CD4-positive, alpha-beta memory T cell (primary cell): ENCODE measurements at regions of chr3 and their contacts with region 1.

Region 1: GRCh38 chr3:109806929-109807328 is 469.6 kb upstream of the DPPA4 start:
- DNase-seq: peak; percentile 72 to 83 (median 80)
- H3K4me3 ChIP-seq: no peak overlapping the region
- H3K4me3 Mint-ChIP-seq: peak overlapping the region; percentile 72 to 88 (median 79)
- H3K27ac ChIP-seq: peak overlapping the region; percentile 40
- H3K27ac Mint-ChIP-seq: peak overlapping the region; percentile 83 to 97 (median 90)
- H3K4me1 ChIP-seq: peaks cover 49% of the 10 kb centered on the region
- H3K4me1 Mint-ChIP-seq: peaks cover 40 to 65% (median 52%) of the 10 kb centered on the region in 4 donors
- H3K27me3 ChIP-seq: no peaks in the 10 kb centered on the region
- H3K27me3 Mint-ChIP-seq: no peaks in the 10 kb centered on the region

Region 2: GRCh38 chr3:109731620-109732473 is 75.1 kb before region 1 on chr3:
- CTCF ChIA-PET with region 1: no interaction called
- POLR2A ChIA-PET with region 1: no interaction called
- intact Hi-C with region 1: loop called (anchors 2 kb)
- DNase-seq: peak; percentile 58 to 66 (median 62)
- H3K4me3 ChIP-seq: no peak overlapping the region
- H3K4me3 Mint-ChIP-seq: no peak overlapping the region
- H3K27ac ChIP-seq: no peak overlapping the region
- H3K27ac Mint-ChIP-seq: no peak overlapping the region
- H3K4me1 ChIP-seq: peaks cover 9% of the 10 kb centered on the region
- H3K4me1 Mint-ChIP-seq: peaks cover 5 to 12% (median 10%) of the 10 kb centered on the region in 4 donors
- H3K27me3 ChIP-seq: no peaks in the 10 kb centered on the region
- H3K27me3 Mint-ChIP-seq: no peaks in the 10 kb centered on the region

Region 3: GRCh38 chr3:109819734-109820133 is 12.8 kb after region 1 on chr3:
- CTCF ChIA-PET with region 1: interaction called, 3 read pairs
- POLR2A ChIA-PET with region 1: interaction called, 4 read pairs
- intact Hi-C with region 1: loop called (anchors 1 kb)
- DNase-seq: no peak
- H3K4me3 ChIP-seq: no peak overlapping the region
- H3K4me3 Mint-ChIP-seq: no peak overlapping the region
- H3K27ac ChIP-seq: no peak overlapping the region
- H3K27ac Mint-ChIP-seq: peak overlapping the region in 1 of 7 donors; percentile 17
- H3K4me1 ChIP-seq: no peaks in the 10 kb centered on the region
- H3K4me1 Mint-ChIP-seq: peaks cover 0 to 3% (median 1%) of the 10 kb centered on the region in 4 donors
- H3K27me3 ChIP-seq: no peaks in the 10 kb centered on the region
- H3K27me3 Mint-ChIP-seq: no peaks in the 10 kb centered on the region

Region 4: GRCh38 chr3:109943181-109943580 is 136.3 kb after region 1 on chr3:
- CTCF ChIA-PET with region 1: no interaction called
- POLR2A ChIA-PET with region 1: no interaction called
- intact Hi-C with region 1: loop called (anchors 10 kb)
- DNase-seq: no peak
- H3K4me3 ChIP-seq: no peak overlapping the region
- H3K4me3 Mint-ChIP-seq: no peak overlapping the region
- H3K27ac ChIP-seq: no peak overlapping the region
- H3K27ac Mint-ChIP-seq: no peak overlapping the region
- H3K4me1 ChIP-seq: no peaks in the 10 kb centered on the region
- H3K4me1 Mint-ChIP-seq: no peaks in the 10 kb centered on the region
- H3K27me3 ChIP-seq: no peaks in the 10 kb centered on the region
- H3K27me3 Mint-ChIP-seq: no peaks in the 10 kb centered on the region

Region 5: DNA sequence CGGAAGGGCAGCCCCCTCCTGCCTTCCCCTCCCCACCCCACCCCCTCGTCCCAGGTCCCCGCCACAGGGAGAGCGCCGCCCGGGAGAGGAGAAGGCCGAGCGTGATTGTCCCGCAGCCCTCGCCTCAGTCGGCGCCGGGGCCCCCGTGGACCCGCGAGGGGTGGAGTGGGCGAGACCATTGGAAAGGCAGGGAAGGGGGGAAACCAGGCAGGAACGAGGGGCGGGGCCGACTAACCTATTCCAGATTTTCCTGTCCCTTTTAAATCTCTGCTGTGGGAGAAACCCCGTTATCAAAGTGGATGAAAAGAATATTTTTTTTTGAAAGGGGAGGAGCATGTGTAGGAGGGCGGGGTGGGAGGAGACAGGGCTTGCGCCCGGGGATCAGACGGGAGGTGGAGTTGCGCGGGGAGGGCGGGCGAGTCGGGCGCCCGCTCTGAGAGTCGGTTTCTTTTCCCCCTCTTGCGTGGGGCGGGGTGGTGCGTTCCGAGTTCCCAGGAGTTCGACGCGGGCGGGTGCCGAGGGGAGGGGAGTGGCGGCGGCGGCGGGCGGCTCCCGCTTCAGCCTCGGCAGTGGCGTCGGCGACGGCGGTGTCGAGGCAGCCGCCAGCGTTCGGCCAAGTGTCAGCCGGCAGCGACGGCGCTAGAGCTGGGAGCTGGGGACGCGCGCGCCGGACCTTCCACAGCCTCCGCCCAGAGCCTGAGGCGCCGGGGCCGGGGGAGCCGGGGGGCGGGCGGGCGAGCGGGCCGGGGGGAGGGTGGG is 1264.5 kb after region 1 on chr3 and contains the start of gene NECTIN3:
- CTCF ChIA-PET with region 1: no interaction called
- POLR2A ChIA-PET with region 1: no interaction called
- intact Hi-C with region 1: loop called (anchors 5 kb)
- DNase-seq: peak; percentile 84 to 92 (median 87)
- H3K4me3 ChIP-seq: peak within 1 kb of the TSS; percentile 78 to 82
- H3K4me3 Mint-ChIP-seq: peak within 1 kb of the TSS; percentile 93 to 97 (median 96)
- H3K27ac ChIP-seq: peak within 1 kb of the TSS; percentile 57
- H3K27ac Mint-ChIP-seq: peak within 1 kb of the TSS; percentile 90 to 95 (median 93)
- H3K4me1 ChIP-seq: peaks cover 32% of the 10 kb centered on the region
- H3K4me1 Mint-ChIP-seq: peaks cover 33 to 54% (median 44%) of the 10 kb centered on the region in 4 donors
- H3K27me3 ChIP-seq: no peaks in the 10 kb centered on the region
- H3K27me3 Mint-ChIP-seq: peaks cover 0 to 4% of the 10 kb centered on the region in 2 donors
- total RNA-seq, gene NECTIN3: 12.2 to 15.6 TPM

Region 6: GRCh38 chr3:111610189-111610588 is 1803.3 kb after region 1 on chr3:
- CTCF ChIA-PET with region 1: no interaction called
- POLR2A ChIA-PET with region 1: no interaction called
- intact Hi-C with region 1: loop called (anchors 5 kb)
- DNase-seq: peak; percentile 82 to 90 (median 85)
- H3K4me3 ChIP-seq: peak overlapping the region in 1 of 2 donors; percentile 20
- H3K4me3 Mint-ChIP-seq: peak overlapping the region; percentile 4 to 87 (median 78)
- H3K27ac ChIP-seq: peak overlapping the region; percentile 65
- H3K27ac Mint-ChIP-seq: peak overlapping the region; percentile 91 to 99 (median 95)
- H3K4me1 ChIP-seq: peaks cover 55% of the 10 kb centered on the region
- H3K4me1 Mint-ChIP-seq: peaks cover 56 to 82% (median 67%) of the 10 kb centered on the region in 4 donors
- H3K27me3 ChIP-seq: no peaks in the 10 kb centered on the region
- H3K27me3 Mint-ChIP-seq: no peaks in the 10 kb centered on the region